Activated naive CD4-positive, alpha-beta T cell treated with anti-CD3 and anti-CD28 coated beads for 36 hours (primary cell): ENCODE measurements at regions of chr3 and their contacts with region 1.

Region 1: GRCh38 chr3:171293142-171293782 is 166.9 kb downstream of the TNIK start:
- DNase-seq: no peak
- H3K4me3 Mint-ChIP-seq: no peak overlapping the region
- H3K27ac Mint-ChIP-seq: no peak overlapping the region
- H3K4me1 Mint-ChIP-seq: peaks cover 53% of the 10 kb centered on the region
- H3K27me3 Mint-ChIP-seq: no peaks in the 10 kb centered on the region

Region 2: GRCh38 chr3:171309906-171310359 is 16.7 kb after region 1 on chr3:
- CTCF ChIA-PET with region 1: interaction called, 3 read pairs
- intact Hi-C with region 1: loop called (anchors 2 kb)
- DNase-seq: no peak
- H3K4me3 Mint-ChIP-seq: no peak overlapping the region
- H3K27ac Mint-ChIP-seq: no peak overlapping the region
- H3K4me1 Mint-ChIP-seq: peaks cover 66% of the 10 kb centered on the region
- H3K27me3 Mint-ChIP-seq: no peaks in the 10 kb centered on the region